ENCODE measurements at regions of chr3 and their contacts with region 1.

Region 1: DNA sequence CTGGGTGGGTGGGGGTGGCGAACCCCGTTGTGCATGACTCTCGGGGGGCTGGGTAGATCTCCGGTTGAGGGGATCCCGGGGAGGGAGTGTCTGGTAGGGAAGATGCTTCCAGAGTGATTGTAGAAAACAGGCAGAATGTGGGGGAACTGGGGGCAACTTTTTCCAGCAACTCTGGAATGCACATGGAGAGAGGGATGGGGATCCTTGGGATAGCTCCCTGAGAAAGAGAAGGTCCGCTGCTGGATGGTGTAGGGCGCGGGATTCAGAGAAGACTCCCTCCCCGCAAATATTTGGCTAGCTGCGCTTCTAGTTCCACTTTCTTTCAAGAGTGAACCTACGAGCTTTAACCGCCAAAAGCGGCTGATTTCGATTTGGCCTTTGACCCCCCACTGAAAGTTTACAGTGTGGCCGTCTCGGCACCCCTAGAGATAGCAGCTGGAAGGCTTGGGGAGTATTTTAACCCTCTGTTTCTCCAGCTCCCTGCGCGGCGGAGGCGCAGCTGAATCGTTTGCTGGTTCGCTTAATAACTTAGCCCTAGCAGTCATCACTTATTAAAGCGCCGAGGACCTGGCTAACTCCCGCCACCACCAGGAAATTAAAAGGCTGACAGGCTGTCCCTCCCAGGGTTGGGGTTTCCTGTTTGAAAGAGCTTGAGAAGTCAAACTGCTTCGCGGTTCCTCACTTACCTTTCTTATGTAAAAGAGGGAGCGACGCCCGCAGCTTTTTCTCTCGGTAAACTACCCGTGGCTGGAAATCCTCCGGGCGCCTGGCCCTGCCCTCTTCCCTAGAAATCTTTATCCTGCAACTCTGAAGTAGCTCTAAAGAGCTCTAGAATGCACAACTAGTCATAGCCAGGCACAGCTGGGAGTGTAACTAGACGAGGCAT is 1.2 kb downstream of the PHLDB2 start:
- DNase-seq: peak; percentile 30
- ATAC-seq: peak; percentile 91
- H3K4me3 ChIP-seq: peak overlapping the region; percentile 64
- H3K27ac ChIP-seq: no peak overlapping the region
- H3K4me1 ChIP-seq: peaks cover 5% of the 10 kb centered on the region
- H3K27me3 ChIP-seq: peaks cover 2 to 13% of the 10 kb centered on the region in 2 experiments
- CTCF ChIP-seq: peak; percentile 21 to 33 (median 33); a peak in 3 of 6 replicates
- EP300 ChIP-seq: no peak
- POLR2A ChIP-seq: no peak
- RAD21 ChIP-seq: peak; percentile 53

Region 2: DNA sequence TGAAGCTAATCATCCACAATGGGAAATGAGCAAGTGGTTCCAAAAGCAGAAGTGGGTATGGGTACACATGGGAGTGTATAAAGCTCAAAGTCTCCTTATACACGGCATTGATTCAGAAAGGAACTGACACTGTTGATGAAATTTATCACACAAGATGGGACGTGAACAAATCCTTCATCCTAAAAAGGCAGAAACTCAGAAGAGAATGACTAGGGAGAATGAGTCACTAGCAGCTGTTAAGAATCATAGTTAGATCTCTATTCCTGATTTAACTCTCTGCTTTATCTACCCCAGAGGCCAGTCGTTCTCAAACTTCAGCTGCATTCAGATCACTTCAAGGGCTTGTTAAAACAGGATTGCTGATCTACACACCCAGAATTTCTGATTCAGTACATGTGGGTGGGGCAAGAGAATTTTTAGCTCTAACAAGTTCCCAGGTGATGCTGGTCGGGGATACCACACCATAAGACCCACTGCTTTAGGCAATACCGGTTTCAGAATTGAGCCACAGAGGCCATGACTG is 98.8 kb before region 1 on chr3:
- CTCF ChIA-PET with region 1: interaction called, 12 read pairs
- POLR2A ChIA-PET with region 1: interaction called, 4 read pairs
- RAD21 ChIA-PET with region 1: interaction called, 27 read pairs
- SMC1A ChIA-PET with region 1: interaction called, 10 read pairs
- in situ Hi-C with region 1: no loop called
- intact Hi-C with region 1: no loop called
- DNase-seq: no peak
- ATAC-seq: peak; percentile 75
- H3K4me3 ChIP-seq: no peak overlapping the region
- H3K27ac ChIP-seq: no peak overlapping the region
- H3K4me1 ChIP-seq: no peaks in the 10 kb centered on the region
- H3K27me3 ChIP-seq: no peaks in the 10 kb centered on the region
- CTCF ChIP-seq: no peak
- EP300 ChIP-seq: no peak; a peak in 1 of 4 replicates
- POLR2A ChIP-seq: no peak
- RAD21 ChIP-seq: no peak

Region 3: DNA sequence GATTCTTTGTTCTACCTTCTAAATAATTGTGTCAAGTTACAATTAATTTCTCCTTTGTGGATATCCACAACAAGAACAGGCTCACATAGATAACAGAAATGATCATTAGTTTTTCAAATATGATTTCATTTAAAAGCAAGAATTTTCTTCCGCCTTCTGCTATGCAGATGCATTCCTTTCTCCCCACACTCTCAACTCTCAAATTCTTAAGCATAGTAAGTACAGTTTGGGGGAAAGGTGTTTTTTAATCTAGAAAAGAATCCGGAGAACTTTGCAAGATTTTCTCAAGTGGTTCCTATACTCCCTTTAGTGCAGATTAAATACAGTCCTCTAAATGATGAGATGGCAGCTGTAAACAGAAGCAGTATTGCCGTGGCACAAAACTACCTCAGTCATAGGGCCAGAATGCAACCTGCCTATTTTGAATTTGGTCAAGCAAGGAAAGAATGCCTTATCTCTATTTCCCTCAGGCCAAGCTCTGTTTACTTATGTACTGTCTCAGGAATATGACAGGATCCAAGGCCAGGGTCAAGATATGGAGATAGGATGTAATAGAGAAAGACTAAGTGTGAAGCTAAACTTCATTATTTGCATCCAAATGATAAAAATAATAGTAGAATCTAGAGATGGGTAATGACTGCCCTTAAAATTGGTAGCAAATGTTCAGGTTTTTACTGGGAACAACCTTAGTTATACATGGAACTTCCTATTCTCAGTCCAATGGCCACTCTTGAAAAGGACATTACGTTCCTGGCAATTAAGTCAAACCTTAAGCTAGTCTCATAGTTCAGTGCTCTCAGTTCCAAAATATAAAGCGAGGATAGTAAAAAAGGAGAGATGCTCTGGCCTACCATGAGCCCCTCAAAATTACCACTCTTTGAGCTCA is 78.4 kb before region 1 on chr3:
- CTCF ChIA-PET with region 1: interaction called, 4 read pairs
- POLR2A ChIA-PET with region 1: no interaction called
- RAD21 ChIA-PET with region 1: interaction called, 3 read pairs
- SMC1A ChIA-PET with region 1: interaction called, 12 read pairs
- in situ Hi-C with region 1: no loop called
- intact Hi-C with region 1: no loop called
- DNase-seq: no peak
- ATAC-seq: no peak
- H3K4me3 ChIP-seq: no peak overlapping the region
- H3K27ac ChIP-seq: no peak overlapping the region
- H3K4me1 ChIP-seq: no peaks in the 10 kb centered on the region
- H3K27me3 ChIP-seq: no peaks in the 10 kb centered on the region
- CTCF ChIP-seq: no peak
- EP300 ChIP-seq: no peak
- POLR2A ChIP-seq: no peak
- RAD21 ChIP-seq: no peak

Region 4: GRCh38 chr3:111874177-111874820 is 14.1 kb after region 1 on chr3:
- CTCF ChIA-PET with region 1: interaction called, 11 read pairs
- POLR2A ChIA-PET with region 1: interaction called, 3 read pairs
- RAD21 ChIA-PET with region 1: interaction called, 4 read pairs
- SMC1A ChIA-PET with region 1: interaction called, 9 read pairs
- in situ Hi-C with region 1: no loop called
- intact Hi-C with region 1: no loop called
- DNase-seq: no peak
- ATAC-seq: no peak
- H3K4me3 ChIP-seq: no peak overlapping the region
- H3K27ac ChIP-seq: no peak overlapping the region
- H3K4me1 ChIP-seq: no peaks in the 10 kb centered on the region
- H3K27me3 ChIP-seq: peaks cover 0 to under 1% of the 10 kb centered on the region in 2 experiments; a peak in 2 of 4 replicates
- CTCF ChIP-seq: no peak
- EP300 ChIP-seq: no peak
- POLR2A ChIP-seq: no peak
- RAD21 ChIP-seq: no peak

Region 5: DNA sequence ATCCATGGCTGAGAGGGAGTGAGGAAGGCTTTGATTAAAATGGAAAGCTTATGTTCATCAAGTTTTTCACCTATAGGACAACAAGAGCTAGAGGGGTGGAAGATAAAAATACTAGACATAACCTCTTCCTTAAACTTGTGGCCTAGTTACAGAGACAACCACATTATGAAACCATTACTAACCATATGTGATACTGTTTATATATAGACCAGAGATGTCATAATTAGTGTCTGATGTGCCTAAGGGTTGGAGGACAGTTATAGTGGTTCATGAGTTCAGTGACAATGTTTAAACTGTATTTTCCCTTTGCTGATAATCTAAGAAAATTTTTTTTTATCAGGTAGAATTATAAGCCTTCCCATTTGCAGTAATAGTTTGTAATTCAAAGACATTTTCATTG is 22.6 kb after region 1 on chr3:
- CTCF ChIA-PET with region 1: interaction called, 11 read pairs
- POLR2A ChIA-PET with region 1: interaction called, 3 read pairs
- RAD21 ChIA-PET with region 1: interaction called, 8 read pairs
- SMC1A ChIA-PET with region 1: interaction called, 14 read pairs
- in situ Hi-C with region 1: no loop called
- intact Hi-C with region 1: no loop called
- DNase-seq: no peak
- ATAC-seq: peak; percentile 96
- H3K4me3 ChIP-seq: no peak overlapping the region
- H3K27ac ChIP-seq: no peak overlapping the region
- H3K4me1 ChIP-seq: peaks cover 4% of the 10 kb centered on the region; the same call in 1 of the 2 replicates
- H3K27me3 ChIP-seq: peaks cover 0 to 3% of the 10 kb centered on the region in 2 experiments; a peak in 1 of 4 replicates
- CTCF ChIP-seq: no peak
- EP300 ChIP-seq: no peak
- POLR2A ChIP-seq: no peak
- RAD21 ChIP-seq: no peak

Measured in GM12878 (cell line).